GM10248 (cell line): ENCODE measurements at regions of chr7 and their contacts with region 1.

Region 1: GRCh38 chr7:41705109-41705901 is 2.4 kb upstream of the INHBA start:
- DNase-seq: peak; percentile 89
- CTCF ChIP-seq: peak; percentile 88

Region 2: DNA sequence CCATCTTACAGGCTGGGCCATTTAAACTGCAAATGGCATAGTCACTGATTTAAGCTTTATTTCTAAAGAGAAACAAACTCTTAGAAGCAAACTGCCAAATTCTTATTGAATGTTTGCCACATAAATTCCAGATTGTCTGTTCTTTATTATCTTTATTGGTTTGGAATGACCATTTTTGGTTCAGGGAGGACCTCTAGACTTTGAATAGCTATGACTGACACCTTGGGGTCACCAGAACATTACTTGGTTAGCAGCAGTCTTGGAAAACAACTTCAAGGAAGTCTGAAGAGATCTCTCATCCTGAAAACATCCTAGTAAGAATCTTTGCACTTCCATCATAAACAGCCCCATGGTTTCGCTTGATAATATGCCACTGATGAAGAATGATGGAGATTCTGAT is 1373.4 kb before region 1 on chr7:
- CTCF ChIA-PET with region 1: interaction called, 12 read pairs
- POLR2A ChIA-PET with region 1: no interaction called
- DNase-seq: no peak
- CTCF ChIP-seq: no peak

Region 3: DNA sequence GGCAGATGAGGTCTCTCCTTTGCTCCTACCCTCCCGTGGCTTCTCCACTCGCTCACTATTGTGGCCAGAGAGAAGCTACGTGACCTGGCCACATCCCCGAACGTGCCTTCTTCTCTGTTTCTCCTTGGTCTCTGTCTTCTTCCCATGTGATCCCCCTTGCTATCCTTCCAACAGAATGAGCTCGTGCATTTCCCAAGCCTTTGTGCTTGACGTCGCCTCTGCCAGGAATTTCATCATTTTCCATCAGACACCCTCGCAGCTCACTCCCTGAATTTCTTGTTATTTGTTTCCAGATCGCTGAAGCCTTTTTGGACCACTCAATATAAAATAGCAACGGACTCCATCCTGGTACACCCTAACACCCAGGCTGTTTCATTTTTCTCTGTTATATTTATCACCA is 11.4 kb after region 1 on chr7:
- CTCF ChIA-PET with region 1: interaction called, 19 read pairs
- POLR2A ChIA-PET with region 1: no interaction called
- DNase-seq: no peak
- CTCF ChIP-seq: no peak

Region 4: GRCh38 chr7:42010751-42011150 is 305.4 kb after region 1 on chr7:
- CTCF ChIA-PET with region 1: no interaction called
- POLR2A ChIA-PET with region 1: no interaction called
- DNase-seq: no peak
- CTCF ChIP-seq: no peak

Region 5: GRCh38 chr7:42082144-42082543 is 376.8 kb after region 1 on chr7:
- CTCF ChIA-PET with region 1: no interaction called
- POLR2A ChIA-PET with region 1: no interaction called
- DNase-seq: no peak
- CTCF ChIP-seq: no peak